Activated CD8-positive, alpha-beta T cell treated with anti-CD3 and anti-CD28 coated beads for 36 hours (primary cell): ENCODE measurements at regions of chr1 and their contacts with region 1.

Region 1: DNA sequence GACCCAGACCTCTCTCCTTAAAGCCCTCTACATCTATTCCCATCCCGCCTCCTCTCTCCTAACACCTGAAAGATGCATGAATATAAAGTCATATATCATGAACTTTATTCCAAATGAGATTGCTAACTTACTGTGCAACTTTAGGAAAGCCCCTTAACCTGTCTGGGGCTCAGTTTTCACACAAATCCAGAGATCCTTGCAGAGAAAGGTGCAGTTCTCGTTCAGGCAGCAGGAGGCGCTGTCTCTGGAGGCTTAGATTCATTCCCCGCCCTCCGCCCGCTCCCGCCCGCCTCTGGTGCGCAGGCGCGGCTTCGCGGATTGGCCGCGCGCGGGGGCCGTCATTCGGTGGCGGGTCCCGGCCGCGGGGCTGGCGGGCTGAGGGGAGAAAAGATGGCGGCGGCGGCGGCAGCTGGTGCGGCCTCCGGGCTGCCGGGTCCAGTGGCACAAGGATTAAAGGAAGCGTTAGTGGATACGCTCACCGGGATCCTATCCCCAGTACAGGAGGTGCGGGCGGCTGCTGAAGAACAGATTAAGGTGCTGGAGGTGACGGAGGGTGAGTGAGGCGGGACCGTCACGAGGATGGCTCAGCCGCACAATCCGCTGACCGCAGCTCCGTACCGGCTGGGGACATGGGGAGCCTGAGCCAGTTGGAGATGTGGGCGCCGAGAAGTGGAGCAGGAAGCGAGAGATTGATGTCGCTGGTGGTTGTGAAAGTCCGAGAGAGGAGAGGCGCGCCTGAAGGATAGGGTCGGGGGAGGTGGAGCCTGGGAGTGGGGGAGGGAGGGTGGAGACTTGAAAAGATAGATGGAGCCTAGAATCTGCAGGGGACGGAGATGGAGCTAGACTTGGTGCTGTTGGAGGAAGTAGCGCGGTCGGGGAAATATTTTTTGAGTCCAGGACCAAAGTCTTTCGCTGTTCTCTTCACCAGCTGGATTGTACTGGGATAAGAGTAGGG is at the start of gene IPO9:
- DNase-seq: peak; percentile 98
- ATAC-seq: peak; percentile 96
- H3K4me3 Mint-ChIP-seq: peak within 1 kb of the TSS; percentile 95
- H3K27ac Mint-ChIP-seq: peak within 1 kb of the TSS; percentile 99
- H3K4me1 Mint-ChIP-seq: peaks cover 39% of the 10 kb centered on the region
- H3K27me3 Mint-ChIP-seq: no peaks in the 10 kb centered on the region
- CTCF ChIP-seq: peak; percentile 98
- total RNA-seq, gene IPO9: 64.6 to 67.5 TPM

Region 2: DNA sequence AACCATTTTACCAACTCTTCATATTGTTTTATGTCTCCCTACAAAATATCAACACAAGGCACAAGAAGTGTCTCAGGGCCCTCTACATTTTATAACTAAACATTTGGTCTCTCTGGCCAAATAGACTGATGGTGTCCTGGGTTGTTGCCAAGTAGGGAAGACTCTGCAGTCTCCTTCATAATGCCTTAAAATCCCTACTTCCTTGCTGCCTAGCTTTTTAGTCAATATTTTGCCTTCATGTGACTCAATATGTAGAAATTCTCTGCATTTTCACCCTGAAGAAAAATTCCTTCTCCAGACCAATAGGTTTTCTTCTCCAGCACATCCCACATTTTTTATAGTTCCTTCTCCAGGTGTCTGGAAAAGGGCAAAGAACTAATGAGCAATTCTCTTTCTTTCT is 72.7 kb before region 1 on chr1:
- CTCF ChIA-PET with region 1: no interaction called
- POLR2A ChIA-PET with region 1: no interaction called
- intact Hi-C with region 1: no loop called
- DNase-seq: no peak
- ATAC-seq: no peak
- H3K4me3 Mint-ChIP-seq: no peak overlapping the region
- H3K27ac Mint-ChIP-seq: no peak overlapping the region
- H3K4me1 Mint-ChIP-seq: peaks cover 6% of the 10 kb centered on the region
- H3K27me3 Mint-ChIP-seq: peaks cover 14% of the 10 kb centered on the region
- CTCF ChIP-seq: no peak

Region 3: GRCh38 chr1:201842472-201843027 is 13.5 kb after region 1 on chr1:
- CTCF ChIA-PET with region 1: interaction called, 13 read pairs
- POLR2A ChIA-PET with region 1: interaction called, 5 read pairs
- intact Hi-C with region 1: no loop called
- DNase-seq: no peak
- ATAC-seq: no peak
- H3K4me3 Mint-ChIP-seq: no peak overlapping the region
- H3K27ac Mint-ChIP-seq: no peak overlapping the region
- H3K4me1 Mint-ChIP-seq: peaks cover 31% of the 10 kb centered on the region
- H3K27me3 Mint-ChIP-seq: no peaks in the 10 kb centered on the region
- CTCF ChIP-seq: no peak

Region 4: GRCh38 chr1:201850053-201850397 is 20.9 kb after region 1 on chr1:
- CTCF ChIA-PET with region 1: interaction called, 12 read pairs
- POLR2A ChIA-PET with region 1: interaction called, 7 read pairs
- intact Hi-C with region 1: no loop called
- DNase-seq: no peak
- ATAC-seq: no peak
- H3K4me3 Mint-ChIP-seq: no peak overlapping the region
- H3K27ac Mint-ChIP-seq: no peak overlapping the region
- H3K4me1 Mint-ChIP-seq: peaks cover 7% of the 10 kb centered on the region
- H3K27me3 Mint-ChIP-seq: no peaks in the 10 kb centered on the region
- CTCF ChIP-seq: no peak

Region 5: GRCh38 chr1:201916649-201917249 is 87.7 kb after region 1 on chr1:
- CTCF ChIA-PET with region 1: no interaction called
- POLR2A ChIA-PET with region 1: no interaction called
- intact Hi-C with region 1: no loop called
- DNase-seq: peak; percentile 14
- ATAC-seq: peak; percentile 55
- H3K4me3 Mint-ChIP-seq: no peak overlapping the region
- H3K27ac Mint-ChIP-seq: no peak overlapping the region
- H3K4me1 Mint-ChIP-seq: no peaks in the 10 kb centered on the region
- H3K27me3 Mint-ChIP-seq: peaks cover 10% of the 10 kb centered on the region
- CTCF ChIP-seq: no peak